ENCODE measurements at regions of chr2 and their contacts with region 1.

Region 1: DNA sequence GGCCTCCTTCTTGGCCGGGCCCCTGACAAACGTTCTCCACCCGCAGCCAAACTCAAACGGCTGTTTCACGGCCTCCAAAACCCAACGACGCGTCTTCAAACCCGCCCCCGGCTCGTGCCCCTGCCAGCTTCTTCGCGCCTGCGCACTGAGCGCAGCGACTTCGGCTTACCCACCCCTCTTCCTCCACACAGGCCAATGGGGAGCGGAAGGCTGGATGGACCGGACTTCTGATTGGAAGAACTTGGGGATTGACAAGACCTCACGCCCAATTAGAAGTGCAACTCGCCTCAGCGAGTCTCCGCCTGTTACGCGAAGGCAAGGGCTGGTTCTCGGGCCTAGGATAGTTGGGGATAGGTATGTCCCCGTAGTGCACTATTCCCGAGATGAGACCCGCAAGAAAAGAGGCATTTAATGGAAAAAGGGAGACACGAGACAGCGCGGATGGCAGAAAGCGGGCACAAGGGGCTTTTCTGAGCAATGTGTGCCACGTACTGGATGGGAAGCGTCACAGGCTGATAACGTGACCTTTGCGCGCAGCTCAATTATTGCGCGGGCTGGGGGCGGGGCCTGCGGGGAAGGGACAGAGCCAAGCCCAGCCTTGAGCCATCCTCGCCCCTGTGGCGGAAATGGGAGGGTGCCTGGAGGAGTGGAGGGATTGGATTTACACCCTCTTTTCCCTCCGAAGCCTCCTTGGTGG is at the start of gene LAPTM4A:
- DNase-seq: peak; percentile 100
- H3K4me3 ChIP-seq: peak within 1 kb of the TSS; percentile 71 to 94 (median 88)
- H3K27ac ChIP-seq: peak within 1 kb of the TSS; percentile 95 to 99 (median 99)
- H3K4me1 ChIP-seq: peaks cover 37 to 41% (median 39%) of the 10 kb centered on the region in 4 donors
- H3K27me3 ChIP-seq: no peaks in the 10 kb centered on the region
- CTCF ChIP-seq: peak in 2 of 3 experiments; percentile 32 to 35
- EP300 ChIP-seq: no peak
- POLR2A ChIP-seq: peak; percentile 75
- total RNA-seq, gene LAPTM4A: 154 to 215 (median 192) TPM

Region 2: DNA sequence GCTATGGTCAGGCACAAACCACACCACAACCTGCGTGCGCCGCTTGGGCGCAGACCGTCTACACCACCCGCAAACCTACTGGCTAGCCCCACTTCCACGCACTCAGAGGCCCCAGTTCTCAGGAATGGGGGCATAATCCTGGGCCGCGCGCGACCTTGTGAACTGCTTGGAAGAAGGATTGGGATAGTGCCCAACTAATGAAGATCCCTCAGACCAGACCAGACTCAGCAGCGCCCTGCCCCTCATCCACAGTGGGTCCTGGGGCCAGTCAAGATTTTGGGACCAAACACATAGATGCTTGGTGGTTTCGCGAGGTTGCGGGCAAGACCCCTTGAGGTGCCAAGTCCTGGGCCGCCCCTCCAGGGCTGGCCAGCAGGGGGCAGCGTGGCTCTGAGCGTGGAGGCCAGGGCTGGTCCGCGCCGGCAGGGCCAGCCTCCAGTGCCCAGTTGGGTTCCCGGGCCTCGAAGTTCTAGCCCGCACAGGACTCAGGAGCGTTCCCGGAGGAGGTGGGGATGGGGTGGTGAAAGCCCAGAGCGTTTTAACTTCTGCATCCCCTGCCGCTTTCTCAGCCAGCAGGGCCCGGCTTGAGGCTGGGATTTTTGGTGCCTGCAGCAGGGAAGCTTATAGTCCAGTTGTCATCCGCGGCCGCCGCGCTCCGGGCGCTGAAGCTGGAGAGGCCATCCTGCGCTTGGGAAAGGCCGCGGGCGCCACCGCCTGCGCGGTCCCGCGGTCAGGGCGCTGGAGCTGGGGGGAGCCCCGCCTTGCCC is 701.6 kb before region 1 on chr2:
- intact Hi-C with region 1: loop called (anchors 10 kb)
- DNase-seq: peak; percentile 92
- H3K4me3 ChIP-seq: peak overlapping the region; percentile 33 to 90 (median 43)
- H3K27ac ChIP-seq: peak overlapping the region; percentile 87 to 94 (median 91)
- H3K4me1 ChIP-seq: peaks cover 26 to 82% (median 71%) of the 10 kb centered on the region in 4 donors
- H3K27me3 ChIP-seq: peaks cover 0 to 28% (median 0%) of the 10 kb centered on the region in 4 donors
- CTCF ChIP-seq: peak; percentile 81 to 89 (median 82)
- EP300 ChIP-seq: no peak
- POLR2A ChIP-seq: no peak

Region 3: GRCh38 chr2:19971691-19972090 is 80.0 kb before region 1 on chr2:
- intact Hi-C with region 1: no loop called
- DNase-seq: no peak
- H3K4me3 ChIP-seq: no peak overlapping the region
- H3K27ac ChIP-seq: no peak overlapping the region
- H3K4me1 ChIP-seq: no peaks in the 10 kb centered on the region
- H3K27me3 ChIP-seq: no peaks in the 10 kb centered on the region
- CTCF ChIP-seq: no peak
- EP300 ChIP-seq: no peak
- POLR2A ChIP-seq: no peak

Region 4: GRCh38 chr2:20015472-20016083 is 36.1 kb before region 1 on chr2:
- intact Hi-C with region 1: loop called (anchors 5 kb)
- DNase-seq: no peak
- H3K4me3 ChIP-seq: no peak overlapping the region
- H3K27ac ChIP-seq: no peak overlapping the region
- H3K4me1 ChIP-seq: peaks cover 8 to 20% (median 19%) of the 10 kb centered on the region in 4 donors
- H3K27me3 ChIP-seq: peaks cover 0 to 19% (median 0%) of the 10 kb centered on the region in 4 donors
- CTCF ChIP-seq: peak; percentile 66 to 72 (median 69)
- EP300 ChIP-seq: no peak
- POLR2A ChIP-seq: no peak

Measured in esophagus muscularis mucosa (tissue), 4 donors.